ENCODE measurements at regions of chr10 and their contacts with region 1.

Region 1: GRCh38 chr10:21989453-21990154 is 13.9 kb downstream of the DNAJC1 start:
- DNase-seq: no peak
- ATAC-seq: peak; percentile 68
- H3K4me3 Mint-ChIP-seq: no peak overlapping the region
- H3K27ac Mint-ChIP-seq: no peak overlapping the region
- H3K4me1 Mint-ChIP-seq: no peaks in the 10 kb centered on the region
- H3K27me3 Mint-ChIP-seq: no peaks in the 10 kb centered on the region
- CTCF ChIP-seq: no peak

Region 2: GRCh38 chr10:20858292-20859124 is 1131.1 kb before region 1 on chr10:
- CTCF ChIA-PET with region 1: no interaction called
- POLR2A ChIA-PET with region 1: no interaction called
- intact Hi-C with region 1: loop called (anchors 5 kb)
- DNase-seq: no peak
- ATAC-seq: no peak
- H3K4me3 Mint-ChIP-seq: no peak overlapping the region
- H3K27ac Mint-ChIP-seq: no peak overlapping the region
- H3K4me1 Mint-ChIP-seq: no peaks in the 10 kb centered on the region
- H3K27me3 Mint-ChIP-seq: peaks cover 2% of the 10 kb centered on the region
- CTCF ChIP-seq: no peak

Region 3: GRCh38 chr10:22420787-22421517 is 431.3 kb after region 1 on chr10:
- CTCF ChIA-PET with region 1: interaction called, 6 read pairs
- POLR2A ChIA-PET with region 1: no interaction called
- intact Hi-C with region 1: loop called (anchors 1 kb)
- DNase-seq: no peak
- ATAC-seq: peak; percentile 42
- H3K4me3 Mint-ChIP-seq: no peak overlapping the region
- H3K27ac Mint-ChIP-seq: no peak overlapping the region
- H3K4me1 Mint-ChIP-seq: peaks cover 1% of the 10 kb centered on the region
- H3K27me3 Mint-ChIP-seq: no peaks in the 10 kb centered on the region
- CTCF ChIP-seq: no peak

Region 4: DNA sequence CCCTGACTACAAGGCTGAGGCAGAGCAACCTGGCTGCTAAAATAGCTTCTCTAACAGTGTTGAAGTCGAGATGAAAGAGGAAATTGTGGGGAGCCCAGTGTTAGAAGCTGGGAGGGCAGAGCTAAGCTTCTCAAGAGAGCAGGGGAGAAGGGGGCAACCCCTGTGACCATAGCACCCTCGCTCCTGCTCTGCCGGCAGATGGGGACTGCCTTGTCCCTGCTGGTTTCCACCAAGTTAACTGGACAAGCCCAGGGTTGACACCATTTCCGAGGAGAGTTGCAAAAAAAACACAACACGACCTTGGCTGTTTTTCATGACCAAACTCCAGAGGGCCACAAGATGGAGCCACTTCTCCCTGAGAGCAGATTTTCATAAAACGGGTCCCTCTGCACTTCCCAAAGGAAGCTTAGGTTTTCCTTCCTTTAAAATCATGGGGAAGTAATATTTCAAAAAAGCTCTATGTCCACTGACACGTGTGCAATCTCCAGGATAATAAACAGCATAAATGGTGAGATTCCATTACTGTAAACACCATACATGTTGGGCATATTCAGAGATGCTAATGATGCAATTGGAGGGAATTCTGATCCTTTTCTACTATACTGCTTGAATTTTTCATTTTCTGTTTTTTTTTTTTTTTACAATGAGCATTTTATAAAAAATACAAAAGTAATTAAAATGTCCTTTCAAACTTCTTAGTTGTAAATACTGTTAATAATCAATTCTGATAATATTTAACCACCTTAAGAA is 584.4 kb after region 1 on chr10:
- CTCF ChIA-PET with region 1: interaction called, 11 read pairs
- POLR2A ChIA-PET with region 1: no interaction called
- intact Hi-C with region 1: loop called (anchors 5 kb)
- DNase-seq: no peak
- ATAC-seq: peak; percentile 34
- H3K4me3 Mint-ChIP-seq: no peak overlapping the region
- H3K27ac Mint-ChIP-seq: peak overlapping the region; percentile 63
- H3K4me1 Mint-ChIP-seq: peaks cover 8% of the 10 kb centered on the region
- H3K27me3 Mint-ChIP-seq: no peaks in the 10 kb centered on the region
- CTCF ChIP-seq: no peak

Region 5: DNA sequence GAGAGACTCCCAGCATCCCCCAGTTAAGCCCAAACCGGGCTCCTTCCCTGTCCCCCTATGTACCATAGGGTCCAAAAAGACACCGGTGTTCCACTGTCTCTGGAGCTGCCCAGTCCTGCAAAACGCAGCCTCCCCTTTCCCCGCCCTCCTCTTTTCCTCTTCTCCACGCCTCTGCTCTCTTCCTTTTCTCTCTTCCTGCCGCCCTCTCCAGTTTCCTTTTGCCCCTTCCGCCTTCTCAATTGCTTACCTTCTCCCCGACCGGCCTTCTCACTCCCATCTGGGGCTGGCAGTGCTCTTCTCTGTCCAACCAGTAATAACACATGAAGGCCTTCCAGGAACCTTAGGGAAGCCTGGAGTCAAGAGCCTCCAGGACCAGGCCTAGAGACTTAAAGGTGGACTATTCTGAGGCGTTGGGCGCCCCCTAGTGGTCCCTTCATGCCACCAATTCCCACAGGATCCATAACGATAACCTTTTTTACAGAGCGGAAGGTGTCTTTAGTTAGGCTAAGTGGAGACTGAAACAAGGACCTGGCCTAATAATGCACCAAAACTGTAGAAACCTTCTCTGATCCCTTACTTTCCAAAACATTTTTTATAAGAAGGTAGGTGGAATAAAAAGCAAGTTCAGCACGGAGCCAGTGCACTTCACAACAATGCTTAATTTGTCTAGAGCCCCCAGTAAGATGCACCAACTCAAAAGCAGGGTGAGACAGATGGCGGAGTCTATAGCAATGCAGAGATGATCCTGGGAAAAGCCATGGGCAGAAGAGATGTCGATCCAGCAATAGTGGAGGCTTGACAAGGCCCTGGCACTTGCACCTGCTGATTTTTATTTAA is 1078.6 kb after region 1 on chr10:
- CTCF ChIA-PET with region 1: interaction called, 6 read pairs
- POLR2A ChIA-PET with region 1: no interaction called
- intact Hi-C with region 1: loop called (anchors 1 kb)
- DNase-seq: peak; percentile 41
- ATAC-seq: peak; percentile 58
- H3K4me3 Mint-ChIP-seq: no peak overlapping the region
- H3K27ac Mint-ChIP-seq: no peak overlapping the region
- H3K4me1 Mint-ChIP-seq: no peaks in the 10 kb centered on the region
- H3K27me3 Mint-ChIP-seq: peaks cover 10% of the 10 kb centered on the region
- CTCF ChIP-seq: no peak

Region 6: DNA sequence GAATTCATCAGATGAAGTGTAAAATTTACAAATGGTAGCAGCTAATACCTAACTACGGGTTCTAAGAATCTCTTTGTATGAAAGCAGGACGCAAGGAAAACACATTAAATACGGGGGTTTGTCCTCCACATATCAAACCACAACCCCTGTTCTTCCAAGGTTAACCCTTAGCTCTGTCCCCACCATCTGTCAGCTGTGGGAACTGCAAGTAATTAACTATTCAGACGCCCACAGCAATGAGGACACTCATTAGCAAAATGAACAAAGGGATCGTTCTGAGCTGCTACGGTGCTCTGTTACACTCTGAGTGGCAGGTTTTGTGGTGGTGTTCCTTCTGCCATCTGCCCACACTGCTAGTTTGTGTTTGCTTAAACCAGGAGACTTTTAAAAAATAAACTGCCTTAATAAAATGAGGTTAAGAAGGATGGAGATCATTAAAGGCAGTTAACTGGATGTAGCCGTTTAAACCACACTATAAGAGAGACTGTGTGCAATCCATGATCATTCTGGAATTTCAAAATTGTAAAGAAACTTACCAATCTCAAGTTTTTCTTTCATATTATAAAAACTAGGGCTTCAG is 1303.6 kb after region 1 on chr10:
- CTCF ChIA-PET with region 1: interaction called, 3 read pairs
- POLR2A ChIA-PET with region 1: no interaction called
- intact Hi-C with region 1: loop called (anchors 1 kb)
- DNase-seq: no peak
- ATAC-seq: peak; percentile 47
- H3K4me3 Mint-ChIP-seq: no peak overlapping the region
- H3K27ac Mint-ChIP-seq: no peak overlapping the region
- H3K4me1 Mint-ChIP-seq: no peaks in the 10 kb centered on the region
- H3K27me3 Mint-ChIP-seq: peaks cover 23% of the 10 kb centered on the region
- CTCF ChIP-seq: no peak